WTC11 (cell line): ENCODE measurements at regions of chr20 and their contacts with region 1.

Region 1: DNA sequence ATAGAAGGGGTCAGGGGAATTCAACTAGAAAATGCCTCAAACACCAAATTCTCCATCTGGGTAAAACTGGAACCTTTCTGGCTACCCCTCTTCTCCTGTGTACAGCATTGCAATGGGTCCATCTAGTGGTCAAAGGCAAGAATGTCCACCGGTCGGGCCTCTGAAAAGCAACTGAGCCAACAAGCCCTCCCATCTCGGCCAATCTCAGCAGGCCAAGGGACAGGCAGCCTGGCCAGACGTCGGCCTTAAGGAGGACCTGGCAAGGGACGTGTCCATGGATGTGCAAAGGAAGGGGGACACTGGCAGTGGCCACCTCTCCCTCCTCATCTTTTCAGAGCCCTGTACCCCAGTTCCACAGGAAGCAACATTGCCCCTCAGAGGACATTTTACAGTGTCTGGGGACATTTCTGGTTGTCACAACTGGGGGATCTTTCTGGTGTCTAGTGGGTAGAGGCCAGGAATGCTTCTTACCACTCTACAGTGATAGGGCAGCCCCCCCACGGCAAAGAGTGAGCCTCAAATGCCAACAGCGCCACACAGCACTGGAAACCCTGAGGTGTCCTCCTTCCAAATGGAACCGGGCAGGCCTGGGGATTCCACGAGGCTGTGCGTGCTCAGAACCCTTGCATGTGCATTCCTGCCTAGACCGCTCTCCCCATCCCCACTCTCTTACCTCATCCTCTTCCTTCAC is 99.8 kb upstream of the FOXA2 start:
- DNase-seq: peak; percentile 84
- ATAC-seq: peak; percentile 87
- H3K4me3 Mint-ChIP-seq: no peak overlapping the region
- H3K27ac Mint-ChIP-seq: no peak overlapping the region
- H3K4me1 Mint-ChIP-seq: peaks cover 29% of the 10 kb centered on the region
- H3K27me3 Mint-ChIP-seq: peaks cover 24% of the 10 kb centered on the region
- CTCF ChIP-seq: peak; percentile 88

Region 2: DNA sequence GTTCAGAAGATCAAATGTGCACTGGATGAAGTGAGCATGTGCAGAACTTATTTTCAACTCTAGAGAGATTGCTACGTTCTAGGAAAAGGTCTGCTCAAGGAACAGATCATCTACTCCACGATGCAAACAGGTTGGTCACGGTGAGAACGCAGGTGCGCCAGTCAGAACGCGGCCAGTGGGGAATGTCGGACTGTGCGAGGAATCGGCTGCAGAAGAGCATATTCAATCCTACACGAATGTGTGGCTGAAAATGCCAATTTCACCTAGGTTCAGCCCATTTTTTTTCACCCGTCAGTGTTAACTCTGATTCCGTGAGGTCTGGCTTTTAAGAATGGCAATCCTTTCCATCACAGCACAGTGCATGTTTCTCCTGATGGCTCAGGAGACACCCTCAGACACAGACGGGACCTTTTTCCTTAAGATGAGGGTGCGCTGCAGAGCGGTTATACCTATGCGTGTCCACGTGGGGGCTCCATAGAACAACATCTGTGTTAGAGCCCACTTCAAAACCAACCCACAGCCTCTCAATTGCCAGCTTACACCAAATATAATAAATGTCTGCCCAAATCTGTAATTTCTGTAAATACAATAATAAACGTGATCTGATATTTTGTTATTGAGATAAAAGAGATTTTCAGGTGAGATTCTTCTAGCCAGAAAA is 350.2 kb before region 1 on chr20:
- CTCF ChIA-PET with region 1: interaction called, 46 read pairs
- POLR2A ChIA-PET with region 1: no interaction called
- DNase-seq: peak; percentile 75
- ATAC-seq: peak; percentile 94
- H3K4me3 Mint-ChIP-seq: no peak overlapping the region
- H3K27ac Mint-ChIP-seq: no peak overlapping the region
- H3K4me1 Mint-ChIP-seq: 0 out of 2 replicates have a peak, but pooled peaks cover under 1% of the 10 kb centered on the region
- H3K27me3 Mint-ChIP-seq: peaks cover 21% of the 10 kb centered on the region
- CTCF ChIP-seq: peak; percentile 83

Region 3: GRCh38 chr20:22339091-22339881 is 344.9 kb before region 1 on chr20:
- CTCF ChIA-PET with region 1: interaction called, 46 read pairs
- POLR2A ChIA-PET with region 1: no interaction called
- DNase-seq: peak; percentile 45
- ATAC-seq: peak; percentile 66
- H3K4me3 Mint-ChIP-seq: peak overlapping the region; percentile 38; the same call in 1 of the 2 replicates
- H3K27ac Mint-ChIP-seq: no peak overlapping the region
- H3K4me1 Mint-ChIP-seq: peaks cover 12% of the 10 kb centered on the region
- H3K27me3 Mint-ChIP-seq: peaks cover 14% of the 10 kb centered on the region
- CTCF ChIP-seq: peak; percentile 77